ENCODE measurements at regions of chr2 and their contacts with region 1.

Region 1: DNA sequence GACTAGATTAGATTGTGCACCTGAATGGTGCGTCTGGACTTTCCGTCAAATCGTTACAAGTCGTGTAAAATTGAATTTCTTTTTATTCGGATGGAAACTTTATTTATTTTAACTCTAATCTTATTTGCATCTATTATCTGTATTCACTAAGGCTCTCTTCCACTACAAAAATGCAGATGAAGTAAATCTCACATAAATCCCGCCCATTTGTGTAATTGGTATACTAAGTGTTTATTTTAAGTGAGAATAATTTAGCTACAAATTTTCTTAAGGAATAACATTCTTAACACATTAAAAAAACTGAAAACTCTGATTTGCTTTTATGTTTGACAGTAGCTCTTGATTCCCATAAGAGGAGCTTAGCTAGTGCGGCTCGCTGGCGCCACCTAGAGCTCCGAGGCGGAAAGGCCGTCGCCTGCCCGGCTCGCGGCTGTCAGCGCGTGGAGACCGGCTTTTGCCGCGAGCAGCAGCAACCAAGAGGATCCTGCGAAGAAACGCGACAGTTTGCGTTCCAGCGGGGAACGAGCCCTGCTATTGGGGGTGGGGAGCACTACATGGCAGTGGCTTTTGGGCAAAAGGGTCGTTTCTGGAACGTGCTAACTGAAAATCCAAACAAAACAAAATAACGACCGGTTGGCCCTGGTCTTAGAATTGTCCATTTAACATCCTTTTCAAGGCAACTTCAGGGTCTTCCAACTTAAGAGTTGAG is 6.7 kb downstream of the SP9 start:
- DNase-seq: peak; percentile 90
- ATAC-seq: peak; percentile 70
- H3K4me3 Mint-ChIP-seq: peak overlapping the region; percentile 63
- H3K27ac Mint-ChIP-seq: peak overlapping the region; percentile 63
- H3K4me1 Mint-ChIP-seq: peaks cover 39% of the 10 kb centered on the region
- H3K27me3 Mint-ChIP-seq: peaks cover 73% of the 10 kb centered on the region

Region 2: DNA sequence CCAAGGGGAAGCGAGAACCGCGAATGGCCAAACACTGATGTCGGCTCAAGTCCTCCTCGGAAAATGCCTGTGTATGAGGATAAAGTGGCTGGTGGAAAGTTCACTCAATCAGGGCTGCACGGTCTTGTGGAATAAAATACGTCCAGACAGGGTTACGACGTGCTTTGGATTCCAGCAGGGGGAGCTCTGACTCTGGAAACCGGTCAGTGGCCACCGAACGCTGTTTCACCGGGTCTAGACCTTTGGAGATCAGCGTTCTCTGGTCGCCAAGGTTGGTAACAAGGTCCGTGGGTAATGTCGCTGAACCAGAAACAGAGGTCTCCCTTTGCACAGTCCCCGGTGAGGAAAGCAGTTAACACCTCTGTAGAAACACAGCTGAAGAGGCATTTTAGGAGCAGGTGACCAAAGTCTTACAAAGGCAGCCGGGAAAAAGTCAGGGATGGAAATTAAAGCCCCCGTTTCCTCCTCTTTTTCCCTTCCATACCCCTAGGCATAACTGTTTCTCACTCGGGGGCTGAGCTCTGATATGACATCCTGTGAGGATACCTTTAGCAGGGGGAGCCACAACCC is 939.0 kb before region 1 on chr2:
- CTCF ChIA-PET with region 1: interaction called, 34 read pairs
- POLR2A ChIA-PET with region 1: no interaction called
- DNase-seq: peak; percentile 83
- ATAC-seq: peak; percentile 92
- H3K4me3 Mint-ChIP-seq: no peak overlapping the region
- H3K27ac Mint-ChIP-seq: no peak overlapping the region
- H3K4me1 Mint-ChIP-seq: peaks cover 7% of the 10 kb centered on the region
- H3K27me3 Mint-ChIP-seq: peaks cover 48% of the 10 kb centered on the region

Region 3: GRCh38 chr2:173884025-173884802 is 457.2 kb before region 1 on chr2:
- CTCF ChIA-PET with region 1: interaction called, 11 read pairs
- POLR2A ChIA-PET with region 1: no interaction called
- DNase-seq: peak; percentile 24
- ATAC-seq: no peak
- H3K4me3 Mint-ChIP-seq: no peak overlapping the region
- H3K27ac Mint-ChIP-seq: no peak overlapping the region
- H3K4me1 Mint-ChIP-seq: no peaks in the 10 kb centered on the region
- H3K27me3 Mint-ChIP-seq: peaks cover 26% of the 10 kb centered on the region

Region 4: GRCh38 chr2:174158003-174158402 is 183.4 kb before region 1 on chr2:
- CTCF ChIA-PET with region 1: interaction called, 18 read pairs
- POLR2A ChIA-PET with region 1: no interaction called
- DNase-seq: peak; percentile 53
- ATAC-seq: peak; percentile 65
- H3K4me3 Mint-ChIP-seq: no peak overlapping the region
- H3K27ac Mint-ChIP-seq: no peak overlapping the region
- H3K4me1 Mint-ChIP-seq: peaks cover 7% of the 10 kb centered on the region
- H3K27me3 Mint-ChIP-seq: no peaks in the 10 kb centered on the region

Region 5: GRCh38 chr2:174326161-174327020 is 15.0 kb before region 1 on chr2:
- CTCF ChIA-PET with region 1: interaction called, 18 read pairs
- POLR2A ChIA-PET with region 1: interaction called, 3 read pairs
- DNase-seq: no peak
- ATAC-seq: peak; percentile 65
- H3K4me3 Mint-ChIP-seq: peak overlapping the region; percentile 66
- H3K27ac Mint-ChIP-seq: no peak overlapping the region
- H3K4me1 Mint-ChIP-seq: peaks cover 29% of the 10 kb centered on the region
- H3K27me3 Mint-ChIP-seq: peaks cover 79% of the 10 kb centered on the region